ENCODE measurements at regions of chr2 and their contacts with region 1.

Region 1: DNA sequence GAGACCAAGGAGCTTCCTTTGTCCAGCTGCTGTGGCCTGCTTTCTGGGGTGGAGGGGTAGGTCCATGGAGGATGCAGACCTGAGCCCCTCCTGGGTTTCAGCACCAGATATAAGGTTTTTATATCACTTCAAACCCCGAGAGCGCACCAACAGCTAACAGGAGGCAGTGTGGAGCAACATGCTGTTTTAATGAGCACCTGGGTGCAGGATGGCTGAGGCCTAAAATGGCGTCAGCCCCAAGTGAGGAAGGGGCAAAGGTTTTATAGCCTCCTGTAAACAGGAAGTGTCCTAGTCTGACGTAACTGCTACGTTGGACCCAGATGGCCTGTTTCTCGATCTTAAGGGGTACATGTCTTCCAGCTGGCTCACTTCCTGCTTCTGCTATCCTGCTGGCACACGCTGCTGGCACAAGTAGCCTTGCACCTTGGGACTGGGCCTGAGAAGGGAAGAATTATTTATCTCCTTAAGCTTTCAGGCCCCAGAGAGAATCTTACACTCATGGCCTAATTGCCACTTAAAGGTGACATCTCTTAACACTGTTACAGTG is 11.4 kb upstream of the REG1B start:
- DNase-seq: no peak
- ATAC-seq: no peak
- H3K4me3 ChIP-seq: no peak overlapping the region
- H3K27ac ChIP-seq: no peak overlapping the region
- H3K4me1 ChIP-seq: no peaks in the 10 kb centered on the region
- H3K27me3 ChIP-seq: no peaks in the 10 kb centered on the region
- CTCF ChIP-seq: no peak
- POLR2A ChIP-seq: no peak

Region 2: DNA sequence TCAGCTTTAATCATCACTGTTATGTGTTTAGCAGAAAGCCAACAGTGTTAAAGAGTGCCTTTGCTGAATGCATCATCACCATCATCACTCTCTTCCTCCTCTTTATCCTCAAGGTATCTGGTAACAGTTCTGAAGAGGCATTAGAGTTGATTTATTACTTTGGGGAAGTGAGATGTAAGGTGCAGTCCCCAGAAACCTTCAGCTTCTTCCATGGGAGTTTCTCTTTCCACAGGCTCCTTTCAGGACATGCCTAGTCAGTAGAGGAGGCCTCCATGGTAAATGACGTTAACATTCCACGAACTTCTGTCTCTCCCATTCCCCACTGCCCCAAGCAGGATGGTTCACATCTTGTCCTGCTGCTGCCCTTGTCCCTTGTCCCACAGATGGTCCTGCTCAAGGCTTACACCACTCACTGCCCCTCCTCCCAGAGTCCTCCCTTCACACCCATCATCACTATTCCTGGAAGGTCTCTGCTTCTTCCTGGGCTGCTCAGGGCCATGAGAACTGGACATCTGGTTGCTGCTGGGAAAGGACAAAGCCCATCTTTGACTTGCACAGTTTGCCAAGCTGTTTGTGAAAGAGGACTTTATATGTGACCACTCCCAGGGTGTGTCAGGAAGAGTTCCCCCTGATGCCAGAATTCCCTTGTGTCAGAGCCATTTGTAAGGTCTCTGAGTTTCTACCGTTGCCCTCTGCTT is 15.7 kb after region 1 on chr2:
- intact Hi-C with region 1: loop called in 1 of 10 experiments (anchors 1 kb)
- DNase-seq: peak in 1 of 5 donors; percentile 28
- ATAC-seq: peak in 3 of 4 donors; percentile 59 to 63 (median 60)
- H3K4me3 ChIP-seq: no peak overlapping the region
- H3K27ac ChIP-seq: no peak overlapping the region
- H3K4me1 ChIP-seq: no peaks in the 10 kb centered on the region
- H3K27me3 ChIP-seq: no peaks in the 10 kb centered on the region
- CTCF ChIP-seq: no peak
- POLR2A ChIP-seq: no peak

Region 3: GRCh38 chr2:79155826-79156476 is 56.7 kb after region 1 on chr2:
- intact Hi-C with region 1: no loop called
- DNase-seq: no peak
- ATAC-seq: no peak
- H3K4me3 ChIP-seq: no peak overlapping the region
- H3K27ac ChIP-seq: no peak overlapping the region
- H3K4me1 ChIP-seq: no peaks in the 10 kb centered on the region
- H3K27me3 ChIP-seq: no peaks in the 10 kb centered on the region
- CTCF ChIP-seq: no peak
- POLR2A ChIP-seq: no peak

Measured in heart left ventricle (tissue), 16 donors.